ENCODE measurements at regions of chr3 and their contacts with region 1.

Region 1: GRCh38 chr3:194592798-194593752 is 40.1 kb downstream of the TMEM44 start:
- DNase-seq: no peak
- H3K4me3 ChIP-seq: no peak overlapping the region
- H3K4me3 Mint-ChIP-seq: no peak overlapping the region
- H3K27ac Mint-ChIP-seq: no peak overlapping the region
- H3K4me1 ChIP-seq: 0 out of 2 replicates have a peak, but pooled peaks cover 6% of the 10 kb centered on the region
- H3K4me1 Mint-ChIP-seq: no peaks in the 10 kb centered on the region
- H3K27me3 ChIP-seq: no peaks in the 10 kb centered on the region
- H3K27me3 Mint-ChIP-seq: no peaks in the 10 kb centered on the region
- CTCF ChIP-seq: no peak

Region 2: GRCh38 chr3:194472290-194472920 is 120.7 kb before region 1 on chr3:
- CTCF ChIA-PET with region 1: interaction called, 16 read pairs
- POLR2A ChIA-PET with region 1: no interaction called
- intact Hi-C with region 1: loop called (anchors 1 kb)
- DNase-seq: peak in 1 of 2 experiments; percentile 55
- H3K4me3 ChIP-seq: no peak overlapping the region
- H3K4me3 Mint-ChIP-seq: no peak overlapping the region
- H3K27ac Mint-ChIP-seq: no peak overlapping the region
- H3K4me1 ChIP-seq: peaks cover 7% of the 10 kb centered on the region
- H3K4me1 Mint-ChIP-seq: no peaks in the 10 kb centered on the region
- H3K27me3 ChIP-seq: no peaks in the 10 kb centered on the region
- H3K27me3 Mint-ChIP-seq: no peaks in the 10 kb centered on the region
- CTCF ChIP-seq: peak; percentile 86 to 97

Region 3: DNA sequence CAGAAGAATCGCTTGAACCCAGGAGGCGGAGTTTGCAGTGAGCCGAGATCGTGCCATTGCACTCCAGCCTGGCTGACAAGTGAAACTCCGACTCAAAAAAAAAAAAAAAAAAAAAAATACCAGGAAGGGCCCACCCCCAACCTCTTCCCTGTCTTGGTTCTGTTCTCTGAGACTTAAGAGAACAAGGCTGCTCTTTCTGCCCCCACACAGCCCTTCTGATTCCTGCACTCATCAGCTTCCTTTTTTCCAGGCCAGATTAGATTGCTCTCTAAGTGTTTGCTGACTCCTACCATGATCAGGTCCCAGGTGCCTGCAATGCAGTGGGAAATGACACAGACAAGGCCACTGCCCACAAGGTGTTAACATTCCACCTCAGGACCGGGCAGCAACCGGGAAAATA is 27.1 kb after region 1 on chr3:
- CTCF ChIA-PET with region 1: interaction called, 10 read pairs
- POLR2A ChIA-PET with region 1: no interaction called
- intact Hi-C with region 1: no loop called
- DNase-seq: no peak
- H3K4me3 ChIP-seq: no peak overlapping the region
- H3K4me3 Mint-ChIP-seq: no peak overlapping the region
- H3K27ac Mint-ChIP-seq: no peak overlapping the region
- H3K4me1 ChIP-seq: no peaks in the 10 kb centered on the region
- H3K4me1 Mint-ChIP-seq: peaks cover 7% of the 10 kb centered on the region
- H3K27me3 ChIP-seq: no peaks in the 10 kb centered on the region
- H3K27me3 Mint-ChIP-seq: no peaks in the 10 kb centered on the region
- CTCF ChIP-seq: no peak